MCF 10A (cell line): ENCODE measurements at regions of chr17 and their contacts with region 1.

Region 1: GRCh38 chr17:70767102-70767701 is 597.9 kb downstream of the KCNJ2 start:
- DNase-seq: peak; percentile 48
- H3K4me3 Mint-ChIP-seq: no peak overlapping the region
- H3K27ac Mint-ChIP-seq: no peak overlapping the region
- H3K4me1 Mint-ChIP-seq: no peaks in the 10 kb centered on the region
- H3K27me3 Mint-ChIP-seq: peaks cover 9% of the 10 kb centered on the region
- CTCF ChIP-seq: peak; percentile 83

Region 2: DNA sequence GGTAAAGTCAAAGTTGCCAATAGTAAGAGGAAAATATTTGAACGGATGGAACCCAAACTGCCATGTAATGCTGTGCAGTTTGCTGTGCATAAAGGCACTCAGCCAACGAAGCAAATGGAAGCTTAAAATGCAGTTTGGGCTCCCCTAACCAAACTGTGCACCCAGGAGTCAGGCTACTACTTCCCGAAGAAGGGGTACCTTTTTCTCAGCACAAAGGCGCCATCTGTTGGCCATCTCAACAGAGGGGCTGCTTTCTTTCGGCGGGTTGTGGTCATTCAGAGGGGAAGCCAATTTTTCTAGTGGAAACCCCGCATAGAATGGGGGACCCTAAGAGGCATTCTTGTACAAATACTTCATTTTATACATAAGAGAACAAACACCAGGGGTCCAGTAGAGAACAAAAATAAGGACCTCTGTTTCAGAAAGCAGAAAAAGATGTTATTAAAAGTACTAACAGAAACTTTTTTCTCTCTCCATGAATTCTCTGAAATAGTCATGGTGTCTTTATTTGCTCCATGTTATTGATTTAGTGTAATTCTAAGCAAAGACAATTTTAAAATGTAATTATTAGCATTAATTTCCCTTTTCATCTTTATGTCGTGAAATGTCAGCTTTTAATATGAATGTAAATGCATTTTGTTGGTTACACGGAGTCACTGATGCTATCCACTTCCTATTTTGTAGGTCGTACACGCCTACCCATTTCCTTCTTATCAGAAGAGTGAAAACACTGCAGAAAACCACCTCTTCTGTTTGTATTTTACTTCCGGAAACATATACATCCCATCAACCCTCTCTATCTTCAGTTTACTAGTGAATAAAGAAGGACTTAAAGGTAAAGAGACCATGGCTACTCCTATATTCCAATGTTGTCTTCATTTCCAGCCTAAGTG is 144.6 kb before region 1 on chr17:
- CTCF ChIA-PET with region 1: no interaction called
- POLR2A ChIA-PET with region 1: no interaction called
- intact Hi-C with region 1: no loop called
- DNase-seq: peak; percentile 75
- H3K4me3 Mint-ChIP-seq: no peak overlapping the region
- H3K27ac Mint-ChIP-seq: no peak overlapping the region
- H3K4me1 Mint-ChIP-seq: peaks cover 6% of the 10 kb centered on the region
- H3K27me3 Mint-ChIP-seq: no peaks in the 10 kb centered on the region
- CTCF ChIP-seq: peak; percentile 68

Region 3: DNA sequence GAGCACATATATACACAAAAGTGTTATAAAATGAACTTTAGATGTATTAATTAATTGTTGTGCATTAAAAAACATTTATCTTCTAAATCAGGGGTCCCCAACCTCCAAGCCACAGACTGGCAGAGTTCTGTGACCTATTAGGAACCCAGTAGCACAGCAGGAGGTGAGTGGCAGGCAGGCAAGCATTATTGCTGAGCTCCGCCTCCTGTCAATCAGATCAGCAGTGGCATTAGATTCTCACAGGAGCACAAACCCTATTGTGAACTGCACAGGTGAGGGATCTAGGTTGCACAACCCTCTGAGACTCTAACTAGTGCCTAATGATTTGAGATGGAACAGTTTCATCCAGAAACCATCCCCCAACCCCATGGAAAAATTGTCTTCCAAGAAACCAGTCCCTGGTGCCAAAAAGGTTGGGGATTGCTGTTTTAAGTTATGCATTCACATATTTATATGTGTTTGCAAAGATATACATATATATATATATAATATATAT is 14.2 kb before region 1 on chr17:
- CTCF ChIA-PET with region 1: interaction called, 19 read pairs
- POLR2A ChIA-PET with region 1: interaction called, 4 read pairs
- intact Hi-C with region 1: no loop called
- DNase-seq: no peak
- H3K4me3 Mint-ChIP-seq: no peak overlapping the region
- H3K27ac Mint-ChIP-seq: no peak overlapping the region
- H3K4me1 Mint-ChIP-seq: no peaks in the 10 kb centered on the region
- H3K27me3 Mint-ChIP-seq: peaks cover 6% of the 10 kb centered on the region
- CTCF ChIP-seq: no peak

Region 4: DNA sequence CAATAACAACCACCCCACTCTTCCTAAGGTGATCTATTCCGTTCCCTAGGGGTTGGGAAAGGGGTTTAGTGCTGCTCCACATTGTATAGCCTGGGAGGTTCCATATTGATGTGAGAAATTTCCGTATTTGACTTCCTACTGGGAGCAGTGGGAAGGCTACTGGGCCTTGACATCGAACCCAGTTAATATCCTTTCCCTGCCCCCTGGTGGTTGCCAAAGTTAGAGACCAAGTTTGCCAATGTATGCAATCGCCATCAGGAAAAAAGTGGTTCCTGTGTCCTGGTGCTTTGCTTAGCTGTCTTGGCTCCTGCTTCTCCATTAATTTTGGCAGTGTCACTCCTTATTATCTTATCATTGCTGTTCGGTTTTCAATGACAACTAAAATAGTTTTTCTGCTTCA is 317.0 kb after region 1 on chr17:
- CTCF ChIA-PET with region 1: interaction called, 21 read pairs
- POLR2A ChIA-PET with region 1: no interaction called
- intact Hi-C with region 1: loop called (anchors 1 kb)
- DNase-seq: peak; percentile 76
- H3K4me3 Mint-ChIP-seq: no peak overlapping the region
- H3K27ac Mint-ChIP-seq: no peak overlapping the region
- H3K4me1 Mint-ChIP-seq: no peaks in the 10 kb centered on the region
- H3K27me3 Mint-ChIP-seq: no peaks in the 10 kb centered on the region
- CTCF ChIP-seq: peak; percentile 55

Region 5: GRCh38 chr17:71237903-71238538 is 470.8 kb after region 1 on chr17:
- CTCF ChIA-PET with region 1: interaction called, 3 read pairs
- POLR2A ChIA-PET with region 1: no interaction called
- intact Hi-C with region 1: loop called (anchors 5 kb)
- DNase-seq: peak; percentile 63
- H3K4me3 Mint-ChIP-seq: no peak overlapping the region
- H3K27ac Mint-ChIP-seq: no peak overlapping the region
- H3K4me1 Mint-ChIP-seq: no peaks in the 10 kb centered on the region
- H3K27me3 Mint-ChIP-seq: no peaks in the 10 kb centered on the region
- CTCF ChIP-seq: peak; percentile 56

Region 6: DNA sequence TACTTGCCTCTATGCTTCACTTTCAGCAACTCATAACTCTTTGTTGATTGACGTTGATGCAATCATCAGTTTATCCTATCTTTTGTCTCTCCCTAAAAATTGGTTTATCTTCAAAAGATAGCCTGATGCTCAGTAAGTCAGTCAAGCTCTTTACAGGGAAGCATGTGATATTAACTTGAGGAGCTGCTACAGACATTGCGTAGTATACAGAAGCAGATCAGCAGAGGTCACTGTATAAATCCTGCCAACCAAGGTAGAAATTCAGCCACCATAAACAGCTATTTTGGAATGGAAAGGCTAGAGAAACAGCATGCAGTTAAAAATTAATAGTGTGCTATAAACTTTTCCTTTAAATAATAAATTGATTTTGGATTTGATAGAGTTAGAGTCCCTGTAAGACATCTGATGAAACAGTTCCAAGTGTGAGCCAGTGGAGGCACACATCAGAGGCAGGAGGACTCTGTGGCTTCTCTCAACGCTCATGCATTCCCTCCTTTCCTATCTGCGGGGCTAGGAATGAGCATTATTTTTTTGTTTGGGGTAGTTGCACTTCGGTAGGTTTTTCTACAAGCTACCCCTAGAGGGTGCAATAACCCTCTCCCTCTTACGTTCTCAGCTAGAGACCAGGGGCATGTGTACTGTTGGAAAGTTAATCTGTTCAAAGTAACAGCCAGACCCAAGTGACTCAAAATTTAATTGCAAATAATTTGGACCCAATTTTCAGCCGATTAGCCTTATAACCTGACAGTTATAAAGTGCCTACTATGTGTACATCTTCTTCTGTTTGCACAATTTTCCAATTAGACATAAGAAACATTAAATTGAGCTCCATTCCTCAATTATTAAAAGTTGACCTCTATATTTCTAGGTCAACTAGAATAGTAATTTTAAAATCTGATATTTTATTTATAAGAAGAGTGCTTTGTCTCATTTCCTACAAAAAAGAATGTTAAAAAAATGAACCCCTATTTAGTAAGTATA is 705.9 kb after region 1 on chr17:
- CTCF ChIA-PET with region 1: interaction called, 4 read pairs
- POLR2A ChIA-PET with region 1: no interaction called
- intact Hi-C with region 1: loop called (anchors 2 kb)
- DNase-seq: peak; percentile 73
- H3K4me3 Mint-ChIP-seq: no peak overlapping the region
- H3K27ac Mint-ChIP-seq: no peak overlapping the region
- H3K4me1 Mint-ChIP-seq: peaks cover 5% of the 10 kb centered on the region
- H3K27me3 Mint-ChIP-seq: no peaks in the 10 kb centered on the region
- CTCF ChIP-seq: peak; percentile 63